Activated CD4-positive, alpha-beta T cell treated with anti-CD3 and anti-CD28 coated beads for 36 hours (primary cell): ENCODE measurements at regions of chr10 and their contacts with region 1.

Region 1: GRCh38 chr10:74589226-74589673 is 237.2 kb upstream of the KAT6B start:
- DNase-seq: peak; percentile 93
- ATAC-seq: peak; percentile 54
- H3K4me3 Mint-ChIP-seq: no peak overlapping the region
- H3K27ac Mint-ChIP-seq: peak overlapping the region; percentile 85
- H3K4me1 Mint-ChIP-seq: peaks cover 69% of the 10 kb centered on the region
- H3K27me3 Mint-ChIP-seq: no peaks in the 10 kb centered on the region

Region 2: GRCh38 chr10:74151056-74151878 is 438.0 kb before region 1 on chr10 and contains the start of gene ADK:
- CTCF ChIA-PET with region 1: no interaction called
- POLR2A ChIA-PET with region 1: no interaction called
- intact Hi-C with region 1: loop called in 1 of 2 experiments (anchors 10 kb)
- DNase-seq: peak; percentile 100
- ATAC-seq: peak; percentile 97
- H3K4me3 Mint-ChIP-seq: no peak within 1 kb of the TSS
- H3K27ac Mint-ChIP-seq: peak within 1 kb of the TSS; percentile 85
- H3K4me1 Mint-ChIP-seq: peaks cover 45% of the 10 kb centered on the region
- H3K27me3 Mint-ChIP-seq: no peaks in the 10 kb centered on the region
- total RNA-seq, gene ADK: 53.7 to 55.0 TPM

Region 3: GRCh38 chr10:74223755-74224531 is 365.3 kb before region 1 on chr10:
- CTCF ChIA-PET with region 1: no interaction called
- POLR2A ChIA-PET with region 1: no interaction called
- intact Hi-C with region 1: loop called in 1 of 2 experiments (anchors 2 kb)
- DNase-seq: peak; percentile 40
- ATAC-seq: peak; percentile 86
- H3K4me3 Mint-ChIP-seq: no peak overlapping the region
- H3K27ac Mint-ChIP-seq: peak overlapping the region; percentile 87
- H3K4me1 Mint-ChIP-seq: peaks cover 28% of the 10 kb centered on the region
- H3K27me3 Mint-ChIP-seq: no peaks in the 10 kb centered on the region

Region 4: DNA sequence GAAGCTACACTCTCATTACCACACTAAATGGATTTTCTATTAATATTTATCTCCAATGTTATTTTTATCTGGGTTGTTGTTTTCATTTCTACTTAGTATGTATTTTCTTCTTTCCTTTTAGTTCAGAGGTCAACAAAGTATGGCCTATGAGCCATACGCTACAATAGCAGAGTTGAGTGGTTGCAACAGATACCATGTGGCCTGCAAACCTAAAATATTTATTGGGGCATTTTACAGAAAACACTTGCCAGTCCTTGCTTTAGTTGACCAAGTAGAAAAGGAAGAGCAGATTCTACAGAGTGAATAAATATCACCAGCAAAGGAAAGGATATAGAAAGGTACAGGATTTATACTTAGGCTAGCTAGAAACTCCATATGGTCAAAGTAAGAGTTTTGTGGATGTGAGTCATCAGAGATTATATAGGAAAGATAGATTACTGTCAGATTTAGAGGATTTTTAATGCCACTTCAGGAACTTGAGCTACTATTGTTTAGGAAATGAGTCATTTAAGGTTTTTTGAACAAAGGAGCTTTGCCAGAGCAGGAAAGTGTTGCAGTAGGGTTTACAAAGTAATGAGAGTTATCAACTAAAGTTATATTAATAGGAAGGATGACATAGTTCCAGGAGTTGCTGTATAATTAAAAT is 86.2 kb before region 1 on chr10:
- CTCF ChIA-PET with region 1: no interaction called
- POLR2A ChIA-PET with region 1: interaction called, 3 read pairs
- intact Hi-C with region 1: loop called (anchors 1 kb)
- DNase-seq: no peak
- ATAC-seq: peak; percentile 63
- H3K4me3 Mint-ChIP-seq: peak overlapping the region; percentile 6
- H3K27ac Mint-ChIP-seq: peak overlapping the region; percentile 81
- H3K4me1 Mint-ChIP-seq: peaks cover 47% of the 10 kb centered on the region
- H3K27me3 Mint-ChIP-seq: no peaks in the 10 kb centered on the region

Region 5: DNA sequence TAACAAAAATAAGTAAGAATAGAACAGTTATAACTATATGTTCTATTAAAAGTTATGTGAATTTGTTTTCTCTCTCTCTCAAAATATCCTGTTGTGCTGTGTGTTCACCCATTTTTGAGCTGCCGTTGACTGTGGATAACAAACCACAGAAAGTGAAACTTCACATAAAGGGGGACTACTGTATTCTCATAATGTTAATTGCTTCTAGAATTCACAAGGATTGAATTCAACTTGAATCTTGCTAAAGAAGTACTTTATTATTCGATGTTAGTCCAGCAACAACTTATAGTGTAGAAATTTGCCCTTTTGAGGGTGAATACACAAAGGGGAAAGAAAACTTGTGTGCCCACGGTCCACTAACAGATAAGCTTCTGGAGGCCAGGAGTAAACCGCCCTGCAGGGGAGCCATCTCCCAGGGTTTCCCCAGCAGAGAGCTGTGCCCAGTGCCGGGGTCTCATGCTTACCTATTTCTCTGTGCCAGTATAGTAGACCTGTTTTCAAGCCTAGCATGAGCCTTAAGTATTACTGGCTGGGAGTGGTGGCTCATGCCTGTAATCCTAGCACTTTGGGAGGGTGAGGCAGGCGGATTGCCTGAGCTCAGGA is 324.2 kb after region 1 on chr10:
- CTCF ChIA-PET with region 1: no interaction called
- POLR2A ChIA-PET with region 1: no interaction called
- intact Hi-C with region 1: no loop called
- DNase-seq: no peak
- ATAC-seq: peak; percentile 70
- H3K4me3 Mint-ChIP-seq: no peak overlapping the region
- H3K27ac Mint-ChIP-seq: no peak overlapping the region
- H3K4me1 Mint-ChIP-seq: peaks cover 52% of the 10 kb centered on the region
- H3K27me3 Mint-ChIP-seq: no peaks in the 10 kb centered on the region

Region 6: DNA sequence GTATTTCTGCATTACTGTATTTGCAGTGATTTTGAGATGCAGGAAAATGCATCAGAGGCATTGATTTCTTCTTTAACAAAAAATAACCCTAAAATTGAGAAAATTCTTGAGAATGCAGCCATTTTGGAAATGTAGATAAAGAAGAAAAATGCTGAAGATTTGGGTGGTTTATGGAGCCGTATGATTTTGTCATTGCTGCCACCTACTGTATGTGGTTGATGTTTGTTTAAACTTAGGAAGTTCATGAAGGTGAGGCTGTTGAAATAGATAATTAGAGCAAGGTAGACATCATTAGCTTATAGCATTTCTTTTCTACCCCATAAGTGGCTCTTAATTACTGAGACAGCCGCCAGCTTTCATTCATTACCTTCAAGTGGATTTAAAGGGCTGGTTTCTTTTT is 430.1 kb after region 1 on chr10:
- CTCF ChIA-PET with region 1: no interaction called
- POLR2A ChIA-PET with region 1: no interaction called
- intact Hi-C with region 1: loop called (anchors 2 to 5 kb)
- DNase-seq: no peak
- ATAC-seq: peak; percentile 34
- H3K4me3 Mint-ChIP-seq: no peak overlapping the region
- H3K27ac Mint-ChIP-seq: no peak overlapping the region
- H3K4me1 Mint-ChIP-seq: peaks cover 31% of the 10 kb centered on the region
- H3K27me3 Mint-ChIP-seq: no peaks in the 10 kb centered on the region

Region 7: DNA sequence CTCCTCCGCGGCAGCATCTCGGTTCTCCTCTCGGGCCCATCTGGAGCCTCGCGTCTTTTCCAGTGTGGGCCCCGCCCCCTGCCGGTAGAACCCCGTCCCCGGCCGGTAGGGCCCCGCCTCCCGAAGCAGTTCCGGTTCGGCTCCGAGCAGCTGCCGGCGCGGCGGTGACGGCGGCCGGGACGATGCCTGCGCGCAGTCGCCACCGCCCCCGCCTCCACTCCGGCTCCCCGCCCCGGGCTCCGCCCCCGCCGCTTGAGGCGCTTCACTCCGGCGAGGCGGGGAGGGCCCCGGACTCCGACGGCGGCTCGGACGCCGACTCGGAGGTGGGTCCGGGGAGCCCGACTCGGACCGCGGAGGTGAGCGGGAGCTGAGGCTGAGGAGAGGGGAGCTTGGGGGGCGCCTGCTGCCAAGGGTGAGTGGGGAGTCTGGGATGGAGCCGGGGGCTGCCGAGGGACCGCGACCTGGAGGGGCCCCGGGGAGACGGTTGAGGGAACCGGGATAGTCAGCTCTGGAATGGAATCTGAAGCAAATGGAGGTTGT is 522.2 kb after region 1 on chr10 and contains the start of gene SAMD8:
- CTCF ChIA-PET with region 1: no interaction called
- POLR2A ChIA-PET with region 1: no interaction called
- intact Hi-C with region 1: loop called in 1 of 2 experiments (anchors 2 kb)
- DNase-seq: peak; percentile 99
- ATAC-seq: peak; percentile 90
- H3K4me3 Mint-ChIP-seq: peak within 1 kb of the TSS; percentile 99
- H3K27ac Mint-ChIP-seq: peak within 1 kb of the TSS; percentile 99
- H3K4me1 Mint-ChIP-seq: peaks cover 51% of the 10 kb centered on the region
- H3K27me3 Mint-ChIP-seq: no peaks in the 10 kb centered on the region
- total RNA-seq, gene SAMD8: 20.5 to 20.9 TPM

Region 8: GRCh38 chr10:75294866-75295701 is 705.8 kb after region 1 on chr10:
- CTCF ChIA-PET with region 1: no interaction called
- POLR2A ChIA-PET with region 1: no interaction called
- intact Hi-C with region 1: loop called in 1 of 2 experiments (anchors 5 kb)
- DNase-seq: peak; percentile 91
- ATAC-seq: peak; percentile 96
- H3K4me3 Mint-ChIP-seq: peak overlapping the region; percentile 47
- H3K27ac Mint-ChIP-seq: no peak overlapping the region
- H3K4me1 Mint-ChIP-seq: peaks cover 5% of the 10 kb centered on the region
- H3K27me3 Mint-ChIP-seq: peaks cover 10% of the 10 kb centered on the region